AG04450 (cell line): ENCODE measurements at regions of chr12 and their contacts with region 1.

Region 1: GRCh38 chr12:54398995-54399793 is 14.7 kb upstream of the ZNF385A start:
- DNase-seq: peak; percentile 61
- H3K4me3 ChIP-seq: no peak overlapping the region
- H3K27ac ChIP-seq: no peak overlapping the region
- H3K27me3 ChIP-seq: no peaks in the 10 kb centered on the region
- CTCF ChIP-seq: peak; percentile 100

Region 2: GRCh38 chr12:54419088-54419892 is 20.1 kb after region 1 on chr12 and contains the start of gene ITGA5:
- CTCF ChIA-PET with region 1: interaction called, 286 read pairs
- POLR2A ChIA-PET with region 1: interaction called, 4 read pairs
- DNase-seq: no peak
- H3K4me3 ChIP-seq: peak within 1 kb of the TSS; percentile 91
- H3K27ac ChIP-seq: peak within 1 kb of the TSS; percentile 83
- H3K27me3 ChIP-seq: no peaks in the 10 kb centered on the region
- CTCF ChIP-seq: no peak
- polyA plus RNA-seq, gene ITGA5: 160 and 185 TPM in 2 replicates

Region 3: GRCh38 chr12:54425702-54426101 is 26.5 kb after region 1 on chr12:
- CTCF ChIA-PET with region 1: interaction called, 47 read pairs
- POLR2A ChIA-PET with region 1: no interaction called
- DNase-seq: no peak
- H3K4me3 ChIP-seq: no peak overlapping the region
- H3K27ac ChIP-seq: no peak overlapping the region
- H3K27me3 ChIP-seq: no peaks in the 10 kb centered on the region
- CTCF ChIP-seq: no peak

Region 4: GRCh38 chr12:54431911-54432814 is 33.0 kb after region 1 on chr12:
- CTCF ChIA-PET with region 1: interaction called, 415 read pairs
- POLR2A ChIA-PET with region 1: no interaction called
- DNase-seq: peak; percentile 16
- H3K4me3 ChIP-seq: no peak overlapping the region
- H3K27ac ChIP-seq: no peak overlapping the region
- H3K27me3 ChIP-seq: no peaks in the 10 kb centered on the region
- CTCF ChIP-seq: no peak

Region 5: GRCh38 chr12:54439521-54440255 is 40.5 kb after region 1 on chr12:
- CTCF ChIA-PET with region 1: interaction called, 415 read pairs
- POLR2A ChIA-PET with region 1: interaction called, 15 read pairs
- DNase-seq: peak; percentile 60
- H3K4me3 ChIP-seq: no peak overlapping the region
- H3K27ac ChIP-seq: no peak overlapping the region
- H3K27me3 ChIP-seq: peaks cover 8% of the 10 kb centered on the region
- CTCF ChIP-seq: peak; percentile 87

Region 6: DNA sequence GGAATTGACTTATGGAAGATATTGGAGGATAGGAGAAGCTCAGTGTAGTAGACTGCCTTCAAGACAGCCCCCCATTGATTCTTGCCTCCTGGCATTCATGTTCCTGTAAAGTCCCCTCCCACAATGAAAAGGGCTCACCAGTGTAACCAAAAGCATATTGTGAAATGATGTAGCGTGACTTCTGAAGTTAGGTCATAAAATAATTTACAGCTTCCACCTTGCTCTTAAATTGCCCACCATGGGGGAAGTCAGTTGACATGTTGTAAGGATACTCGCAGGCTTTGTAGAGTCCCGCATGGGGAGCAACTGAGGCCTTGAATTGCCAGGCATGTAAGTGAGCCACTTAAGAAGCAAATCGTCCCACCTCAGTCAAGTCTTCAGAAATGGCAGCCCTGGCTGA is 49.1 kb after region 1 on chr12:
- CTCF ChIA-PET with region 1: interaction called, 52 read pairs
- POLR2A ChIA-PET with region 1: no interaction called
- DNase-seq: no peak
- H3K4me3 ChIP-seq: no peak overlapping the region
- H3K27ac ChIP-seq: no peak overlapping the region
- H3K27me3 ChIP-seq: peaks cover 34% of the 10 kb centered on the region
- CTCF ChIP-seq: no peak

Region 7: GRCh38 chr12:54509617-54510016 is 110.4 kb after region 1 on chr12:
- CTCF ChIA-PET with region 1: no interaction called
- POLR2A ChIA-PET with region 1: no interaction called
- DNase-seq: no peak
- H3K4me3 ChIP-seq: no peak overlapping the region
- H3K27ac ChIP-seq: no peak overlapping the region
- H3K27me3 ChIP-seq: peaks cover 5% of the 10 kb centered on the region
- CTCF ChIP-seq: no peak

Region 8: DNA sequence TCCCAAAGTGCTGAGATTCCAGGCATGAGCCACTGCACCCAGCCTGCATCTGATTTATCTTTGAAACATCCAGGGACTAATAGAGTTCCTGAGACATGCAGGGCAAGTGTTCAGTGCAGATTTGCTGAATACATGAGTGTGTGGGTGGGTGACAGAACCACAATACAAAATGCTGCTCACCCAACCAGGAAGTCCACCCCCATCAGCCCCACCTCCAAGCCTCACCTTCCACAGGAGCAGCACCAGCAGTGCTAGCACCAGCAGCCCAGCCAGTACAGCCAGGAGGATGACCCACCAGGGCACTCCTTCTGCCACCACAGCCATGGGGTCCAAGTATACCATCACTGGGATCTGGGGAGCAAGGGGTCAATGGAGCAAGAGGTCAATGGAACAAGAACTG is 1288.6 kb after region 1 on chr12:
- CTCF ChIA-PET with region 1: no interaction called
- POLR2A ChIA-PET with region 1: no interaction called
- DNase-seq: no peak
- H3K4me3 ChIP-seq: no peak overlapping the region
- H3K27ac ChIP-seq: no peak overlapping the region
- H3K27me3 ChIP-seq: peaks cover 8% of the 10 kb centered on the region
- CTCF ChIP-seq: no peak